ENCODE measurements at regions of chr3 and their contacts with region 1.

Region 1: DNA sequence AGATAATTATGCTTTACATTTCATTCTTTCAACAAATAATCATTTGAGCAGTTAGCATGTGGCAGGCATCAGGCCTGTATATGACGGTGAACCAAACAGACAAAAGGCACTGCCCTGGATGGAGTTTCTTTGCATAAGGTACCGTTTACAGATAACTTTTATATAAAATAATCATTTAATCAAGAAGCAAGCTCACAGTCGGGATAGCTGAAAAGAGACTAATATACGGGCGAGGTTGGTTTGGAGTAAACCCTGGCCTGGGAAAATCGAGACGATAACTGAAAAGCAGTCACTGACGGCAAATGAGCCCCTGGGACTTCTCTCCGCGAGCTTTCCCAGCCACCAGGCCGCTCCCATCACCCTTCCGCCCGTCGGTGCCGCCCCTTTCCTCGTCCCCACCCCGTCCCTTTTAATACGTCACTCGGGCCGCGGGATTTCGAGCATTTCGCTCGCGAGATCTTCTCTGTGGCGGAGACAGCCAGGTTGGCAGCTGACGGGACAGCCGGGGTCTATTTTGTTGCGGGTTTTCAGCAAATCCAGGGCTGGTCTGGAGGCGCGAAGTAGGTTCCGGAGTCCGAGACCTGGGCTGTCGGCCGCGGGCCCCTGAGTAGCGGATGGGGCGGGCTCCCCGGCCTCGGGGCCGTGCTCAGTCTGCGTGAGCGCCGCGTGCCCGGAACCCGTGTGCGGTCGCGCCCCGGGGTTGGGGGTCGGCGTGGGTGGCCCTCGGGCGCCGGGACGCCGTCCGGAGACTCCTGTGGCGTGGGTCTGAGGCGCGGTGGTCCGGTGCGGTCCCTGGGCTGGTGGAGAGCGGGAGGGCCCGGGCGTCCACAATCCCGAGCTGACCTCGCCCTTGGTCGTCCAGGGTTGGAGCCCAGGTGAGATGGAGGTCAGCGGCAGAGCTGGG is at the start of gene NMD3:
- DNase-seq: peak; percentile 98
- total RNA-seq, gene NMD3: 70.3 TPM

Region 2: DNA sequence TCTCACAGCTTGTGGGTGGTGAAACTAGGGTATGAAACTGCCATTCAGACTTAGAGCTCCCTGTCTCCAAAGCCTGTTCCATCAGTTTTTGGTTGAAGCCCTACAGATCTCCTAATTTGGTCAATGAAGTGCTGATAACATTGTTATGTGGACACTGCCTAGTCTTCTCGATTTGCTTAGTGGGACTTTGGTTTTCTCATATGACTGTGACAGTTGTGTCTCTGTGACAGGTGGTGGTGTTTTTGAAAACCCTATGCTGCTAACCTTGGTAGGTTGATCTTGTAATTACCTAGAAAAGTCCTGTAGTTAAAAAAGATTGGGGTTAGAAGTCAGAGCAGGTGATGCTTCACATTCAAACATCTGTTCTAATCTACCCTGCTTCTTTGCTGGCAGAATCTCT is 455.9 kb before region 1 on chr3:
- intact Hi-C with region 1: loop called (anchors 10 kb)
- DNase-seq: no peak

Region 3: GRCh38 chr3:161413127-161413849 is 192.2 kb after region 1 on chr3:
- intact Hi-C with region 1: loop called (anchors 5 kb)
- DNase-seq: peak; percentile 83